ENCODE measurements at regions of chr10 and their contacts with region 1.

Region 1: GRCh38 chr10:8437891-8438290 is 383.4 kb downstream of the GATA3 start:
- DNase-seq: no peak

Region 2: GRCh38 chr10:8260645-8261044 is 177.2 kb before region 1 on chr10:
- CTCF ChIA-PET with region 1: no interaction called
- POLR2A ChIA-PET with region 1: no interaction called
- DNase-seq: no peak

Region 3: DNA sequence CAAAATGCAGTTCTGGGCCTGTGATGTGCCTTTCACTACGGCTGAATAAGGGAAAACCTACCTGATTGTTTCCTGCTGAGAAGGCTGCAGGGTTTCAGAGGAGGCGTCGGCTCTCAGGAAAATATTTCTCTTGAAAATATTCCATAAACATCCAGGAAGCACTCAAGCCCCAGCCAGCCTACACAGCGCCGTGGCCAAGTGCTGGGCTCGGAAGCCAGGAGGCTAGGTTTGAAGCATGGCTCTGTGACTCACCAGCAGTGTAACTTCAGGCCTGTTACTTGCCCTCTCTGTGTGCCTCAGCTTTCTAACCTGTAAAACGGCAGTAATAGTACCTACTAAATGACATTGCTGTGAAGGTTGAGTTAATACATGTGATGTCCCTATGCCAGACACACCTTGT is 15.7 kb after region 1 on chr10:
- CTCF ChIA-PET with region 1: interaction called, 10 read pairs
- POLR2A ChIA-PET with region 1: no interaction called
- DNase-seq: no peak

Region 4: GRCh38 chr10:8705415-8705814 is 267.5 kb after region 1 on chr10:
- CTCF ChIA-PET with region 1: no interaction called
- POLR2A ChIA-PET with region 1: no interaction called
- DNase-seq: no peak